ENCODE measurements at regions of chr11 and their contacts with region 1.

Region 1: DNA sequence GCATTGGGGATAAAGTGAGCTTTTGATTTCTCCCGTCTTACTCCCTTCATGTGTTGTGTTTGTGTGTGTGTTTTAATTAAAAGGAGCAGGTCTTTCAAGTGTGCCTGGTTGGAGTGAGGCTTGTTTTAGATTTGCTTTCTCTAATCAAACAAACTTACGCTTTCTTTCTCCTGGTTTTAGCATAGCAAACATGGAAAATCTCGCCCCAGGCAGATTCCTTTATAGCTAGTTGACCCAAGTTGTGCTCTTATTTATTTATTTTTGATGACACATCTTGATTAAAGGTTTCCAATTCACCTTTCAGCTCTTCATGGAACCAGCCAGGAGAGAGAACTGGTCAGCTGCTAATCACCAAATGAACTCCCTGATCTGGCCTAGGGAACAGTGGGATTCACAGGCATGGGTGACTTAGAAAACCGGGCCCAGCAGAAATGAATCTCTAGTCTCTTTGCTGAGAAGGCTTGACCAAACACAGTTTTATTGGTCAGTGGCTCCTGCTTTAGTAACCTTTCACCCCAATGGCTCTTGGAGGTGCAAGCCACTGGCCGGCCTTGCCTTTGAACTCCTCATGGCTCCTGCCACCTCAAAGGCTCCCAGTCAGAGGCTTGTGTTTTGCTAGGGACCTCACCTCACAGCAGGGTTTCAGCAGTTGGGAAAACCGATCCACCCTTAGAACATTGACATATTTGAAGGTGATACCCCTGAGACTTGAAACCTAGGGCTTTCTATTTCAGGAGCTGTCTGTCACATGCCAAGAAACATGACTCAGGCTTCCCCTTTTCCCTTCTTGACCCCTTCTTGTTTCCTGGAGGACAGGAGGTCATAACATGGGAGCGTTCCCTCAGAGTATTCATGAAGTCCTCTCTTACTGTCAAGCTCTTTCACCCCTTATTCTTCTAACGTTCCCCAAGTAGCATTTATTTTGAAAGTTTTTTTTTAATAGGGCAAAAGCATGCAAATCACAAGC is 48.7 kb downstream of the EXT2 start:
- DNase-seq: peak; percentile 27
- ATAC-seq: no peak

Region 2: DNA sequence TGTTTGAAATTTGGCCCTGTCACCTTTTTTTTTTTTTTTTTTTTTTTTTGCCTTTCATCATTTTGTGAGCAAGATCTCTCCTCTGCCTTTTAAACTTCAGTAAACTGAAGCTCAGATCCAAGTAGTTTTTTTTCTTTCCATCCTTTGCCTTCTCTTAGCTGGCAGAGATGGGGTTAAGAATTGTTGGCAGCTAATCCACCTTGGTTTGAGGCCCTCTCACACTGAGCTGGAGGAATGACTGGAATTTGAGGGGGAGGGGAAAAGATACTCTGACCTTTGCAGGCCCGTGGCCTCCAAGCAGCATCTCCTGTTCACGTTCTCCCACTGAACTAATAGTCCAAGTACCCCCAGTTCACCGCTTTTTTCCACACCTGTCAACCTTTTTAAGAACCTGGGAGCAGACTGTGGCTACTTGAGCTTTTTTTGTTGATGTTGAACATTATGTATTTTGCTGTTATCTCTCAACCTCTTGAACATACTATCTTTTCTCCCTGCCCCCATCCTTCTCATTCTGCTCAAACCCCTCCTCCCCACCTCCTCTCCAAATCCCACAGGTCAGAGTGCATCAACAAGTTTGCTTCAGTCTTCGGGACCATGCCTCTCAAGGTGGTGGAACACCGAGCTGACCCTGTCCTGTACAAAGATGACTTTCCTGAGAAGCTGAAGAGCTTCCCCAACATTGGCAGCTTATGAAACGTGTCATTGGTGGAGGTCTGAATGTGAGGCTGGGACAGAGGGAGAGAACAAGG is 99.5 kb after region 1 on chr11:
- intact Hi-C with region 1: loop called (anchors 10 kb)
- DNase-seq: no peak
- ATAC-seq: no peak

Measured in Right ventricle myocardium inferior (tissue), 1 donor.